Natural killer cell (primary cell): ENCODE measurements at regions of chr12 and their contacts with region 1.

Region 1: DNA sequence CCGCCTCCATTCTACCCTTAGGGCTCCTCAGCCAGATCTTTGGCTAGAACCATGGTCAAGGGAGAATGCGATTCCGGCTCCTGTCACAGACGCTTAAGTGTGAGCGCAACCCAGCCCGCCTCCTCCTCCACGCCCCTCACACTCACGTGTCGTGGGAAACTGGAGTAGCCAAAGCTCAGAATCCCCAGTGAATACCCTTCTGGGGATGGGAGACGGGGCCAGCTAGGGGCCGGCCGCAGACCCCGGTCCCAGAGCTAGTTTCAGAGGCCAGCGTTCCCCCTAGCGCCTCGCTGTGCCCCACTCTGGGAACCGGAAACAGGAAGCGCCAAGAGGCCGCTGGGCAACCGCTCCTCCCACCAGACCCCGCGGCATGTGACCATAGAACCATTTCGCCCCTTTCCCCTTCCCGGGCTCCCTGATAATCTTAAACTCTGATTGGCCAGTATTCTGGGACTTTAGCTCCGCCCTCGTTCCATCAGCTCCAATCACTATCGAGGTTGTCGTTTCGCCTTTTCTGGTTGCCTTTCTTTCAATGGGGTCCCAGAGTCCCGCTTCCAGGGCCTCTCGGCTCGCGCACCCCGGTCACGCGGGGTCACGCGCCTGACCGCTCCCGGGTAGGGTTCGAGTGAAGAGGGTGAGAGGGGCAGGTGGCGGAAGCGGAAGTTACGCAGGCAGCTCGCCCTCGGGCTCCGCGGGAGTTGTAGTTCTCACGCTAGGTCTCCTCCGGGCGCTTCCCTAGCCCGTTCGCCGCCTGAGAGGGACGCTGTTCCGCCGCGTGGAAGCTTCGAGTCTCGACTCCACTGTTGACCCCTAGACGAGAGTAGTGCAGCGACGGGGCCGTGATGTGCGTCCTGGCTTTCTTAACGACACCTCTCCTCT is at the start of gene M6PR:
- DNase-seq: peak; percentile 82 to 95
- ATAC-seq: peak; percentile 70 to 81 (median 79)
- H3K4me3 ChIP-seq: peak within 1 kb of the TSS; percentile 89
- H3K4me3 Mint-ChIP-seq: peak within 1 kb of the TSS; percentile 90
- H3K27ac ChIP-seq: peak within 1 kb of the TSS; percentile 99
- H3K27ac Mint-ChIP-seq: peak within 1 kb of the TSS; percentile 95 to 98
- H3K4me1 ChIP-seq: peaks cover 44% of the 10 kb centered on the region
- H3K4me1 Mint-ChIP-seq: peaks cover 75 to 88% of the 10 kb centered on the region in 2 donors
- H3K27me3 ChIP-seq: no peaks in the 10 kb centered on the region
- H3K27me3 Mint-ChIP-seq: no peaks in the 10 kb centered on the region
- CTCF ChIP-seq: peak; percentile 32
- total RNA-seq, gene M6PR: 245 to 270 (median 255) TPM

Region 2: GRCh38 chr12:8914716-8915526 is 34.7 kb before region 1 on chr12:
- intact Hi-C with region 1: loop called (anchors 5 kb)
- DNase-seq: peak; percentile 45 to 77
- ATAC-seq: peak; percentile 75 to 78 (median 77)
- H3K4me3 ChIP-seq: peak overlapping the region; percentile 60
- H3K4me3 Mint-ChIP-seq: no peak overlapping the region
- H3K27ac ChIP-seq: peak overlapping the region; percentile 45
- H3K27ac Mint-ChIP-seq: no peak overlapping the region
- H3K4me1 ChIP-seq: peaks cover 10% of the 10 kb centered on the region
- H3K4me1 Mint-ChIP-seq: peaks cover 13 to 14% of the 10 kb centered on the region in 2 donors
- H3K27me3 ChIP-seq: no peaks in the 10 kb centered on the region
- H3K27me3 Mint-ChIP-seq: no peaks in the 10 kb centered on the region
- CTCF ChIP-seq: no peak

Region 3: GRCh38 chr12:8989413-8989812 is 39.8 kb after region 1 on chr12 and contains the start of gene KLRG1:
- intact Hi-C with region 1: loop called (anchors 2 kb)
- DNase-seq: peak in 1 of 2 donors; percentile 43
- ATAC-seq: peak; percentile 53 to 75 (median 62)
- H3K4me3 ChIP-seq: peak within 1 kb of the TSS; percentile 52
- H3K4me3 Mint-ChIP-seq: peak within 1 kb of the TSS; percentile 94
- H3K27ac ChIP-seq: peak within 1 kb of the TSS; percentile 92
- H3K27ac Mint-ChIP-seq: peak within 1 kb of the TSS; percentile 90 to 96
- H3K4me1 ChIP-seq: peaks cover 45% of the 10 kb centered on the region
- H3K4me1 Mint-ChIP-seq: peaks cover 68 to 71% of the 10 kb centered on the region in 2 donors
- H3K27me3 ChIP-seq: no peaks in the 10 kb centered on the region
- H3K27me3 Mint-ChIP-seq: no peaks in the 10 kb centered on the region
- CTCF ChIP-seq: no peak
- total RNA-seq, gene KLRG1: 76.3 to 165 (median 86.2) TPM

Region 4: DNA sequence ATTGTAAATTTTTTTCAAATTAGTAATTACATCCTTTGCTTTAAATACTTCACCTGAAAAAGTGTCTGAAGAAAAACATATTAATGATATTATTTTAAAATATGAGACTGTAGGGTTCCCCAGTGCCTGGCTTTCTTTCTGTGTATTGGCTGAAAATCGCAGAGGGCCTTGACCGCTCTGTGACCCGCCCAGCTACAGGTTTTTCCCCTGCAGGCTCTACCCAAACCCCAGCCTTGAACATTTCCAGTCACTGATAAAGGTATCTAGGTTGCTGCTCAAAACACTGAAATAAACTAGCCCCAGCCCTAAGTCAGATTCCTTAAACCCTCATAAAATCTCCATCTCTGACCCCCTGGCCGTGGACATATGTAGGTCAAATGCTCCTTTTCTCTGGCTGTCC is 51.7 kb after region 1 on chr12:
- intact Hi-C with region 1: no loop called
- DNase-seq: no peak
- ATAC-seq: no peak
- H3K4me3 ChIP-seq: no peak overlapping the region
- H3K4me3 Mint-ChIP-seq: peak overlapping the region; percentile 71
- H3K27ac ChIP-seq: peak overlapping the region; percentile 49
- H3K27ac Mint-ChIP-seq: peak overlapping the region; percentile 87 to 90
- H3K4me1 ChIP-seq: peaks cover 48% of the 10 kb centered on the region
- H3K4me1 Mint-ChIP-seq: peaks cover 64 to 66% of the 10 kb centered on the region in 2 donors
- H3K27me3 ChIP-seq: no peaks in the 10 kb centered on the region
- H3K27me3 Mint-ChIP-seq: no peaks in the 10 kb centered on the region
- CTCF ChIP-seq: no peak

Region 5: GRCh38 chr12:9027161-9028059 is 77.8 kb after region 1 on chr12:
- intact Hi-C with region 1: loop called (anchors 1 kb)
- DNase-seq: peak; percentile 42 to 48
- ATAC-seq: peak in 1 of 3 donors; percentile 33
- H3K4me3 ChIP-seq: no peak overlapping the region
- H3K4me3 Mint-ChIP-seq: peak overlapping the region; percentile 67
- H3K27ac ChIP-seq: peak overlapping the region; percentile 79
- H3K27ac Mint-ChIP-seq: no peak overlapping the region
- H3K4me1 ChIP-seq: peaks cover 78% of the 10 kb centered on the region
- H3K4me1 Mint-ChIP-seq: peaks cover 23 to 38% of the 10 kb centered on the region in 2 donors
- H3K27me3 ChIP-seq: no peaks in the 10 kb centered on the region
- H3K27me3 Mint-ChIP-seq: no peaks in the 10 kb centered on the region
- CTCF ChIP-seq: no peak

Region 6: DNA sequence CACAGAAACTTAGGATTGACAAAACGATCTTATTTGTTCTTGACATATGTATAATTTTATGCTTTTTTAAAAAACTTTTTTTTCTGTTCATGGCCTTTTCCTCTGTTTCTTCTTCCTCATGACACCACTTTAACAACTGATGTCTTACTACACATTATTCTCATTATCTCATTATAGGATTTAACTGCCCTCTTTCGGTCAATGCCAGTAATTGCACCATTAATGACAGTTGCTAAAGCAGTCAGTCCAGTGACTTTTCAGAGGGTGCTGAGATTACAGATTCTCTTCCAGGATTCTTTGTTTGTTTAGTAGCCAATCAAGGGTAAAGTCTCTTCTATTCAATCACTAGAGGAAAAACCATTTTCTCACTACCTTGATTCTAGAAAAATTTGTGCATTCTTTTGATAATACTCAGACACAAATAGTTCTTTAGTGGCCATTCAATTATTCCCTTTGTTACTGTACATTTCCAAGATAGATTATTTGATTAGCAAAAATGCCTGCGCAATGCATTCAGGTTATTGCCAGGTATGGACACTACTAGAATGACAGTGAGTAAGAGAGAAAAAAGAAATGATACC is 89.9 kb after region 1 on chr12:
- intact Hi-C with region 1: loop called (anchors 1 kb)
- DNase-seq: peak in 1 of 2 donors; percentile 78
- ATAC-seq: peak; percentile 86 to 99 (median 86)
- H3K4me3 ChIP-seq: no peak overlapping the region
- H3K4me3 Mint-ChIP-seq: peak overlapping the region; percentile 65
- H3K27ac ChIP-seq: no peak overlapping the region
- H3K27ac Mint-ChIP-seq: peak overlapping the region; percentile 4 to 88
- H3K4me1 ChIP-seq: peaks cover 16% of the 10 kb centered on the region
- H3K4me1 Mint-ChIP-seq: peaks cover 22 to 49% of the 10 kb centered on the region in 2 donors
- H3K27me3 ChIP-seq: no peaks in the 10 kb centered on the region
- H3K27me3 Mint-ChIP-seq: no peaks in the 10 kb centered on the region
- CTCF ChIP-seq: peak; percentile 90